ENCODE measurements at regions of chr2 and their contacts with region 1.

Region 1: GRCh38 chr2:82853299-82853698 is 1605.8 kb downstream of the SUCLG1 start:
- DNase-seq: peak; percentile 86 to 95 (median 89)
- H3K4me3 ChIP-seq: no peak overlapping the region
- H3K27ac ChIP-seq: no peak overlapping the region
- H3K4me1 ChIP-seq: peaks cover 0 to 39% (median 1%) of the 10 kb centered on the region in 4 experiments
- H3K27me3 ChIP-seq: no peaks in the 10 kb centered on the region

Region 2: DNA sequence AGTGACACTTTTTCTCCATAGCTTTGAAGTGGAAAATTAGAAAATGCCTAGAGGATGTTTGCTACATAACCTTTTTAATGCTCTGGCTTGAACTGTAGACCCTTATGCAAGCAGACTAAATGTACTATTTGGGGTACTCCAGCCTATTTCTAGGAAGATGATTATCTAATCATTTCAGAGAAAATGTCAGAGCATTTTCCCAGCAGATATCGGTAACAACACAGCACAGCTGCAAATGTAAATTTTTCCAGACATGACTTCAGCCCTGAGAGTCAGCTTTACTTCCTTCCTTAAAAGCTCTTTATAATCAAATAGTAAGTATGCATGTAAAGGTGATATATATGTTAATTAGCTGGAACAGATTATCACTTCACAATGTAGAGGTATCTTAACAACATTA is 41.4 kb before region 1 on chr2:
- CTCF ChIA-PET with region 1: no interaction called
- POLR2A ChIA-PET with region 1: interaction called, 12 read pairs
- DNase-seq: peak in 2 of 3 donors; percentile 3 to 18
- H3K4me3 ChIP-seq: peak overlapping the region in 1 of 7 experiments; percentile 39
- H3K27ac ChIP-seq: no peak overlapping the region
- H3K4me1 ChIP-seq: peaks cover 0 to 14% (median 0%) of the 10 kb centered on the region in 4 experiments
- H3K27me3 ChIP-seq: no peaks in the 10 kb centered on the region

Region 3: GRCh38 chr2:83112858-83113257 is 259.6 kb after region 1 on chr2:
- CTCF ChIA-PET with region 1: no interaction called
- POLR2A ChIA-PET with region 1: no interaction called
- DNase-seq: no peak
- H3K4me3 ChIP-seq: no peak overlapping the region
- H3K27ac ChIP-seq: no peak overlapping the region
- H3K4me1 ChIP-seq: no peaks in the 10 kb centered on the region
- H3K27me3 ChIP-seq: no peaks in the 10 kb centered on the region